ENCODE measurements at regions of chr10 and their contacts with region 1.

Region 1: DNA sequence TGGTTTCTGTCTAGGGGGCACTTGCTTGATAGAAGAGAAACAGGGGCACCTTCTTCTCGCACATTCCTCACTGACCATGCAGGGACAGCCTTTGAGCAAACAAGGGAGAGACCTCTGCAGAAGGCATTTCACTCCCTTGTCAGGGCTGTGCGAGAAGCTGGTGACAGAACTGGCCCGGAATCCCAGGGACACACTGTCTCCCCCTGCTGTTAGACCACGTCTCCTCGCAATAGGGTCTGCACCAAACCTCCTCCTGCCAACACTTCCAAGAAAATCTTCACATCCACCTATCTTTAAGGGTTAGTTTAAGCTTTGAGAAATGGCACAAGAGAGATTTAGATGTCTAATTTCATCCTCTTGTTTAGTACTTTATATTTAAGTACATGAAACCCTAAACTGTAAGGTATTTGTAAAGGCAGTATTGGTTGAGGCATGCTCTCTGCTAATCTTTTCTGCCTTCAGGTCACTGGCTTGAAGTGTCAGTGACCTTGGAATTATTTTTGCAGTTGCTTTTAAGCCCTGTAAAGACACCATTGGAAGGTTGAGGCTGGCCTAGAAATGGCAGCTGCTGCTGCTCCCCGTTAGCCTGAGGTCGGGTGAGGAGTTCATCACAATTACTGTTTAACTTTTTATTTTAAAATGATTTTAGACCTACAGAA is 37.0 kb downstream of the RBM20 start:
- H3K4me3 ChIP-seq: no peak overlapping the region
- H3K27ac ChIP-seq: no peak overlapping the region
- H3K4me1 ChIP-seq: no peaks in the 10 kb centered on the region
- CTCF ChIP-seq: peak; percentile 52; the same call in 1 of the 2 replicates

Region 2: GRCh38 chr10:110414563-110415309 is 266.4 kb before region 1 on chr10:
- CTCF ChIA-PET with region 1: no interaction called
- POLR2A ChIA-PET with region 1: no interaction called
- H3K4me3 ChIP-seq: no peak overlapping the region
- H3K27ac ChIP-seq: no peak overlapping the region
- H3K4me1 ChIP-seq: no peaks in the 10 kb centered on the region; the same call in 1 of the 2 replicates
- CTCF ChIP-seq: no peak

Region 3: DNA sequence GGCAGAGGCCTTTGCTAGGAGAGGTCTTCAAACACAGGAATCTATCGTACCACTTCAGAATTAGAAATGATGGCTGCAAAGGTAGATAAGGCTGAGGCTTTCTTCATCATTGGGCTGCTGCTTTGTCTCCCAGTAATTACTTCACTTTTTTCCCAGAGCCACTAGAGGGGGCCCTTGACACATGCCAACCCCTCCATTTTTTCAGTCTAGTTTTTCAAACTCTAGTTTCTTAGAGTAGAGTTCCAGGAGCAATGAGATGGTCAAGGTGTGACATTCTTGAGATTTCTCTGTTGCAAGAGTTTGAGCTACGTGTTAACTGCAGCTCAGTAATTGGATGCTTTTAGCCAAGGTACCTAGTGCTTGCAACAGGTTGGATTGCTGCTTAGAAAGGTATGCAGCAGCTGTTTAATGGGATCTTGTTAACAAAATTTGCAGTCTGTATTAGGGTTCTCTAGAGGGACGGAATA is 70.8 kb before region 1 on chr10:
- CTCF ChIA-PET with region 1: interaction called, 43 read pairs
- POLR2A ChIA-PET with region 1: interaction called, 3 read pairs
- H3K4me3 ChIP-seq: no peak overlapping the region
- H3K27ac ChIP-seq: no peak overlapping the region
- H3K4me1 ChIP-seq: peaks cover 18% of the 10 kb centered on the region
- CTCF ChIP-seq: peak; percentile 74

Region 4: GRCh38 chr10:110643653-110644597 is 37.2 kb before region 1 on chr10 and contains the start of gene RBM20:
- CTCF ChIA-PET with region 1: interaction called, 14 read pairs
- POLR2A ChIA-PET with region 1: no interaction called
- H3K4me3 ChIP-seq: peak within 1 kb of the TSS; percentile 87
- H3K27ac ChIP-seq: peak within 1 kb of the TSS; percentile 86
- H3K4me1 ChIP-seq: peaks cover 44% of the 10 kb centered on the region
- CTCF ChIP-seq: peak; percentile 55; the same call in 1 of the 2 replicates